Esophagus squamous epithelium (tissue), 5 donors: ENCODE measurements at regions of chr2 and their contacts with region 1.

Region 1: GRCh38 chr2:120699292-120699691 is 36.4 kb upstream of the GLI2 start:
- DNase-seq: no peak
- H3K4me3 ChIP-seq: no peak overlapping the region
- H3K27ac ChIP-seq: no peak overlapping the region
- H3K4me1 ChIP-seq: peaks cover 0 to 9% (median 3%) of the 10 kb centered on the region in 3 donors
- H3K27me3 ChIP-seq: peaks cover 0 to 65% (median 0%) of the 10 kb centered on the region in 4 donors
- CTCF ChIP-seq: no peak
- POLR2A ChIP-seq: no peak

Region 2: DNA sequence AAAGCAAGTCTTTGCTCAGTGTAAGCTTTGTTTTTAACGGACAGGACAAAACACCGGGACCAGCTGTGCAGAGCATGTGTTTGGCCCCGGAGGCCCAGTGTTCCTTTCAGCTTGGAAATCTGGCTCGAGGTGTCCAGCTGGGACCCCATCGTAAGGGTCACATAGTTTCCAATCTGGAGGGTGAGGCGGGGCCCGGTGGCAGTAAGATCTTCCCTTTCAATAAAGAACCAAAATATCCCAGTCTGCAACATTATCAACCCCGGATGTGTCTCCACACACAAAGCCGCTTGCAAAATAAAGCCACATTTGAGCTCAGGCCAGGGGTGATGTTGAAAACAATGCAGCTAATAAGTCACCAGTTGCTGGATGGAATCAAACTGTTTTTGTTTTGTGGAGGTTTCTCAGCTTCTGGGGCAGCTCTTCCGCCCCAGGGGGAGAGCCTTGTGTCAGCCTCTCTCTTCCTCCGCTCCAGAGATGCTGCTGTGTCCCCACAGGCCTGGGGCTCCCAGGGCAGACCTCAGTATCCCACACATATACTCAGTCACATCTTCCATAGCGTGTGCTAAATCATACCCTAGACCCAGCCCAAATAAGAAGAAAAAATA is 102.2 kb before region 1 on chr2:
- intact Hi-C with region 1: no loop called
- DNase-seq: no peak
- H3K4me3 ChIP-seq: no peak overlapping the region
- H3K27ac ChIP-seq: peak overlapping the region in 3 of 4 donors; percentile 25 to 69 (median 54)
- H3K4me1 ChIP-seq: peaks cover 0 to 41% (median 19%) of the 10 kb centered on the region in 3 donors
- H3K27me3 ChIP-seq: peaks cover 0 to 86% (median 0%) of the 10 kb centered on the region in 4 donors
- CTCF ChIP-seq: no peak
- POLR2A ChIP-seq: no peak

Region 3: GRCh38 chr2:120983344-120983743 is 284.1 kb after region 1 on chr2:
- intact Hi-C with region 1: no loop called
- DNase-seq: no peak
- H3K4me3 ChIP-seq: no peak overlapping the region
- H3K27ac ChIP-seq: no peak overlapping the region
- H3K4me1 ChIP-seq: peaks cover 0 to 5% (median 0%) of the 10 kb centered on the region in 3 donors
- H3K27me3 ChIP-seq: no peaks in the 10 kb centered on the region
- CTCF ChIP-seq: no peak
- POLR2A ChIP-seq: no peak

Region 4: DNA sequence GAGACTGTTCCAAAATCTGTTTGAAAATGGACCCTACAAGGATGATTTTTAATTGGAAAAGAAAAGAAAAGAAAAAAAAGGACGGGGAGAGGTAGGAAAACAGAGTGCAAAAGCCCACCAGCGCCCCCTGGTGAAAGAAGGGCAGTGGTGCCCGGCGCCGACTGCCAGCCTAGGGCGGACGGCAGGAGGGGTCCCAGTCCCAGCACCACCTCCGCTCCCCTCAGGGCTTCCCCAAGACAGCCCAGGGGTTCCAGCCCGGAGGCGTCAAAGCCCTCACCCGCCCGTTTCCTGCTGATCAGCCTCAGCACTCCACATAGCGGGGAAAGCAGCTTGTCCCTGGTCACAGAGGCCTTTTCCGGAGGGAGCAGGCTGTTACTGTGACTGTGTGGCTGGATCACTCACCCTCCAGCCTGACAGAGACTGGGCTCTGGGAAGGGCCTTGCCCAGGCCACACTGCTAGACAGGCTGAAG is 371.8 kb after region 1 on chr2:
- intact Hi-C with region 1: loop called (anchors 5 kb)
- DNase-seq: no peak
- H3K4me3 ChIP-seq: no peak overlapping the region
- H3K27ac ChIP-seq: no peak overlapping the region
- H3K4me1 ChIP-seq: peaks cover 0 to 24% (median 17%) of the 10 kb centered on the region in 3 donors
- H3K27me3 ChIP-seq: peaks cover 0 to 92% (median 0%) of the 10 kb centered on the region in 4 donors
- CTCF ChIP-seq: peak; percentile 81 to 94 (median 89)
- POLR2A ChIP-seq: no peak